Breast epithelium (tissue), 4 donors: ENCODE measurements at regions of chr3 and their contacts with region 1.

Region 1: GRCh38 chr3:54065140-54065539 is 57.2 kb upstream of the CACNA2D3 start:
- DNase-seq: no peak
- H3K4me3 ChIP-seq: no peak overlapping the region
- H3K27ac ChIP-seq: no peak overlapping the region
- H3K4me1 ChIP-seq: no peaks in the 10 kb centered on the region
- H3K27me3 ChIP-seq: no peaks in the 10 kb centered on the region
- CTCF ChIP-seq: no peak
- POLR2A ChIP-seq: no peak

Region 2: DNA sequence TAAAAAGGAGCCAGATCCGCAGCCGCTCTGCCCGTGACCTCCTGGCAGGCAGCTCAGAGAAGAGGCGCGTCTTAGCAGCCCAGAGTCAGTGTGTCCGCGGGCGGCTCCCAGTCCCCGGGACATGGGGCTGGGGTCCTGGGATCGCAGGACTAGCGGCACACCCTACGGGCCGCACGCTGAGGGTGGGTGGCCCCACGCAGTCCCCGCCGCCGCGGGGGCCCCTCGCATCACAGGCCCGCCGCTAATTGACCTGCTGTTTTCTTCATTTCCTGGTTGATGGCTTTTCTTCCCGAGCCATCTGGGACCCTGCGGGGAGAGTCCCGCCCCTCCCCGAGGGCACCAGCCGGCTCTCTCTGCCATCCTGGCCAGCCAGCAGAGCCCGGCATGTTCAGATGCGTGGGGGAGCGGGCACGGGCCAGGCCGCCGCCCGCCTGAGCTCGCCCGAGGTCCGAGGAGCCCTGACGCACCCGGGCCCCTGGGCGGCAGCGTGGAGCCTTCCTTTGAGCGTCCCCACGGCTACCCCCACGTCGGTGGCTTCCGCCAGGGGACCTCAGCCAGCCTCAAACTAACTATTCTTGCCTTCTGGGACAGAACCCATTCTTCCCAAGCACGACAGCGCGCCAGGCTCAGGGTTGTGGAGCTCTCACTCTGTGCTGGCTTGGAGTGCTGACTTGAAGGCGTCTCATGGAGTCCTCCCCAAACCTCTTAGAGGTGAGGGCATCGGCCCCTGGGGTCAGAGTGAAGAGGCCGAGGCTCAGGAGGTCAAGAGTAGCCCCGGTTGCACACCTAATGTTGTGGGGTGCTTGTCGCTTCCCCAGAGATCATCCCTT is 22.7 kb after region 1 on chr3:
- intact Hi-C with region 1: loop called (anchors 2 kb)
- DNase-seq: no peak
- H3K4me3 ChIP-seq: peak overlapping the region in 2 of 3 donors; percentile 21 to 39
- H3K27ac ChIP-seq: no peak overlapping the region
- H3K4me1 ChIP-seq: no peaks in the 10 kb centered on the region
- H3K27me3 ChIP-seq: peaks cover 0 to 22% of the 10 kb centered on the region in 2 donors
- CTCF ChIP-seq: no peak
- POLR2A ChIP-seq: no peak